Mammary epithelial cell (primary cell): ENCODE measurements at regions of chr1 and their contacts with region 1.

Region 1: GRCh38 chr1:175742790-175743459 is 470 bp downstream of the TNR start:
- DNase-seq: peak; percentile 45
- H3K4me3 ChIP-seq: no peak overlapping the region
- H3K27ac ChIP-seq: no peak overlapping the region
- H3K4me1 ChIP-seq: no peaks in the 10 kb centered on the region
- H3K27me3 ChIP-seq: no peaks in the 10 kb centered on the region
- CTCF ChIP-seq: no peak

Region 2: GRCh38 chr1:175783126-175783722 is 40.3 kb after region 1 on chr1:
- CTCF ChIA-PET with region 1: no interaction called
- dilution Hi-C with region 1: no loop called
- in situ Hi-C with region 1: no loop called
- intact Hi-C with region 1: no loop called
- DNase-seq: peak; percentile 24
- H3K4me3 ChIP-seq: no peak overlapping the region
- H3K27ac ChIP-seq: no peak overlapping the region
- H3K4me1 ChIP-seq: no peaks in the 10 kb centered on the region
- H3K27me3 ChIP-seq: no peaks in the 10 kb centered on the region
- CTCF ChIP-seq: no peak

Region 3: DNA sequence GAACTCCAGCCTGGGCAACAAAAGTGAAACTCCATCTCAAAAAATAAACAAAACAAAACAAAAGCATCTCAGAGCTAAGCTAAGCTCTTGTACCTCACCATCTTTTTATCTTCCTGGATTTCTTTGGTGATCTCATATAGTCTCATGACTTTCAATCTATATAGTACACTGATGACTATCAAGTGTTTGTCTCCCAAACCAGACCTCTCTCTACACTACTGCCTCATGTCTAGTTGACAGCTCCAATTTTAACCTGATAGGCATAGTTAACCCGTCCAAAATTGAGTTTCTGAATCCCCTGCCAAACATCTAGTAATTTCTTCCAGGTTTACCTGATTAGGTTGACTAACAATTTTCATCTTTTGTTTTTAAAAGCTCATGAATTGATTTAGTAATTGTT is 312.5 kb after region 1 on chr1:
- CTCF ChIA-PET with region 1: interaction called, 11 read pairs
- dilution Hi-C with region 1: no loop called
- in situ Hi-C with region 1: no loop called
- intact Hi-C with region 1: no loop called
- DNase-seq: no peak
- H3K4me3 ChIP-seq: no peak overlapping the region
- H3K27ac ChIP-seq: no peak overlapping the region
- H3K4me1 ChIP-seq: no peaks in the 10 kb centered on the region
- H3K27me3 ChIP-seq: no peaks in the 10 kb centered on the region
- CTCF ChIP-seq: no peak

Region 4: GRCh38 chr1:176073524-176074157 is 330.7 kb after region 1 on chr1:
- CTCF ChIA-PET with region 1: no interaction called
- dilution Hi-C with region 1: no loop called
- in situ Hi-C with region 1: no loop called
- intact Hi-C with region 1: loop called (anchors 10 kb)
- DNase-seq: peak; percentile 48
- H3K4me3 ChIP-seq: no peak overlapping the region
- H3K27ac ChIP-seq: no peak overlapping the region
- H3K4me1 ChIP-seq: no peaks in the 10 kb centered on the region
- H3K27me3 ChIP-seq: no peaks in the 10 kb centered on the region
- CTCF ChIP-seq: peak; percentile 68 to 73